A549 (cell line): ENCODE measurements at regions of chr19 and their contacts with region 1.

Region 1: GRCh38 chr19:771332-771785 is 20.4 kb downstream of the MISP start:
- DNase-seq: peak in 1 of 2 experiments; percentile 81
- ATAC-seq: peak; percentile 48 to 63; a peak in 3 of 6 replicates
- H3K4me3 ChIP-seq: no peak overlapping the region
- H3K27ac ChIP-seq: peak overlapping the region in 1 of 2 experiments; percentile 89; a peak in 3 of 6 replicates
- H3K4me1 ChIP-seq: peaks cover 18% of the 10 kb centered on the region
- CTCF ChIP-seq: peak; percentile 44
- EP300 ChIP-seq: no peak
- POLR2A ChIP-seq: no peak
- RAD21 ChIP-seq: peak; percentile 37 to 44; a peak in 4 of 5 replicates

Region 2: GRCh38 chr19:827783-828321 is 56.5 kb after region 1 on chr19 and contains the start of gene AZU1:
- CTCF ChIA-PET with region 1: interaction called, 10 read pairs
- POLR2A ChIA-PET with region 1: no interaction called
- DNase-seq: no peak
- ATAC-seq: peak; percentile 8 to 19; a peak in 1 of 6 replicates
- H3K4me3 ChIP-seq: no peak within 1 kb of the TSS
- H3K27ac ChIP-seq: no peak within 1 kb of the TSS
- H3K4me1 ChIP-seq: peaks cover 7% of the 10 kb centered on the region; the same call in 2 of the 3 replicates
- CTCF ChIP-seq: no peak
- EP300 ChIP-seq: no peak
- POLR2A ChIP-seq: no peak
- RAD21 ChIP-seq: no peak
- polyA plus RNA-seq, gene AZU1: 0.15 and 0.31 TPM in 2 replicates